ENCODE measurements at regions of chr5 and their contacts with region 1.

Region 1: DNA sequence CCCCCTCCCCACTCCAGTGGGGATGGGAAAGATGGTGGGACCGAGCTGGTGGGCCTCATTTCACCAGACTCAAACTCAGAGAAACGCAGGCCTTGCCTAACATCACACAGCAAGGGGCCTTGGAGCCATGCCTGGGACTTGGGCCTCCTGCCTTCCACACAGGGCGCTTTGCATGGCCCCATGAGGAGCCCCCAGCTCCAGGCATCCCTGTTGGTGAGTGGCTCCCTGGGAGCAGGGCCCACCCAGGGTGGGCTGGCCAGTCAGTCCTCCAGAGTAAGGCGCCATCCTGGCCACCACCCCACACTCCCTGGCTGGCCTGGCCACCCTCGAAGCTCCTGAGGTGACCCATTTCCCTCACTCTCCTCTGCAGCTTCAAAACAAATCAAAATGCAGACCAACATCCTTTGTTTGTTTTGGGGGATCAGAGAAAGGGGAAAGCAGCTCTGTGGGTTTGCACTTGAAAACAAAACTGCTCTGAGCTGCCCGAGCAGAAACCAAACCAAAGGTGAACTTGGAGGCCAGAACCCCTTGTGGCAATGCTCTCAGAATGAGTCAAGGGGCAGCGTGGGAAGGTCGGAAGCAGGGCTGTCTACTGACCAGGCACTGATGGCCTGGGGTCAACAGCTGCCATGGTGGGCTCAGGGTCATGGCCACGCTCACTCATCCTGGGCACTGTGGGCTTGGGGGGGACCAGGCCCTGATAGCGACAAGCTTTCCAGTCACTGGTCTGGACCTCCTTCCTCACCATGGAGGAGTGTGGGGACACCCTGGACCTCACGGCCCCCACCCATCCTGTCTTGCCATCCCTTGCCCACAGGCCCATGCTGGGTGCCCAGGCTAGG is 37.0 kb upstream of the VDAC1 start:
- DNase-seq: no peak
- ATAC-seq: no peak; the same call in 2 of the 3 replicates
- H3K4me3 ChIP-seq: peak overlapping the region in 1 of 3 experiments; percentile 14; a peak in 1 of 6 replicates
- H3K27ac ChIP-seq: no peak overlapping the region
- H3K4me1 ChIP-seq: peaks cover 62% of the 10 kb centered on the region
- H3K27me3 ChIP-seq: no peaks in the 10 kb centered on the region
- CTCF ChIP-seq: no peak
- EP300 ChIP-seq: no peak
- POLR2A ChIP-seq: no peak
- RAD21 ChIP-seq: no peak

Region 2: DNA sequence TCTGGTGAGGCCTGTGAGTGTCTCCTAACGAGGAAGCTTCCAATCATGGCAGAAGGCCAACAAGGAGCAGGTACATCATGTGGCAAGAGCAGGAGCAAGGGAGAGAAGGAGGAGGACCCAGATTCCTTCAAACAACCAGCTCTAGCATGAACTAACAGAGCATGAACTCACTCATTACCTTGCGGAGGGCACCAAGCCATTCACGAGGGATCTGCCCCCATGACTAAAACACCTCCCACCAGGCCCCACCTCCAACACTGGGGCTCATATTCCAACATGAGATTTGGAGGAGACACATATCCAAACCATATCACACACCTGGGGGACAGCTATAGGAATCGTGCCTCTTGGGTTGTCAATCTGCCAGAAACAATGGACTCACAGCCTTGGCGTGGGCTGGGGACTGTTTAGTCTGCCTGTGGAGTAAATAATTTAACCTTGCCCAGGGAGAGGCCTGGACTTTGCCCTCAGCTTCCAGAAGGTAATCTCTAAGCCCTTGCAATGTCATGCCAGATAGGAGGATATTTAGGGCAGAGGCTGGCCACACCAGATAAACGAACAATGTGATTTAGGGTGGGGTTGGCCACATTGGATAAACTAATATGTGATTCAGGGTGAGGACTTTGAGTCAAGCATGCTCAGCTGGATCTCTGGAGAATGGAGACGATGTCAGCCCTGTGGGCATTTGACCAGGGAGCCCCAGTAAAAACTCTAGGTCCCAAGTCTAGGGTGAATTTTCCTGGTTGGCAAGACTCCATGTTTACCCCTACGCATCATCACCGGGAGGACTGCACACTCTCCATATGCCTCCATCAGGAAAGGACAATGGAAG is 23.4 kb before region 1 on chr5:
- CTCF ChIA-PET with region 1: interaction called, 4 read pairs
- POLR2A ChIA-PET with region 1: interaction called, 17 read pairs
- in situ Hi-C with region 1: no loop called
- intact Hi-C with region 1: no loop called
- DNase-seq: peak; percentile 91
- ATAC-seq: peak; percentile 72
- H3K4me3 ChIP-seq: peak overlapping the region; percentile 24 to 60 (median 58)
- H3K27ac ChIP-seq: peak overlapping the region; percentile 93
- H3K4me1 ChIP-seq: peaks cover 60% of the 10 kb centered on the region
- H3K27me3 ChIP-seq: no peaks in the 10 kb centered on the region
- CTCF ChIP-seq: 0 out of 2 replicates have a peak, but pooled peaks have one; percentile 22
- EP300 ChIP-seq: peak; percentile 48 to 64; a peak in 2 of 4 replicates
- POLR2A ChIP-seq: peak in 1 of 2 experiments; percentile 67
- RAD21 ChIP-seq: no peak

Region 3: GRCh38 chr5:134070725-134071613 is 29.2 kb after region 1 on chr5:
- CTCF ChIA-PET with region 1: interaction called, 9 read pairs
- POLR2A ChIA-PET with region 1: no interaction called
- in situ Hi-C with region 1: no loop called
- intact Hi-C with region 1: loop called (anchors 5 kb)
- DNase-seq: peak; percentile 72
- ATAC-seq: peak; percentile 88
- H3K4me3 ChIP-seq: peak overlapping the region; percentile 63 to 75 (median 68)
- H3K27ac ChIP-seq: peak overlapping the region; percentile 58
- H3K4me1 ChIP-seq: peaks cover 47% of the 10 kb centered on the region
- H3K27me3 ChIP-seq: no peaks in the 10 kb centered on the region
- CTCF ChIP-seq: peak; percentile 81
- EP300 ChIP-seq: peak in 1 of 2 experiments; percentile 84; a peak in 2 of 4 replicates
- POLR2A ChIP-seq: peak; percentile 13 to 24; a peak in 1 of 4 replicates
- RAD21 ChIP-seq: no peak; the same call in 1 of the 2 replicates

Region 4: GRCh38 chr5:134140530-134141201 is 98.9 kb after region 1 on chr5:
- CTCF ChIA-PET with region 1: interaction called, 71 read pairs
- POLR2A ChIA-PET with region 1: interaction called, 14 read pairs
- in situ Hi-C with region 1: loop called (anchors 5 kb)
- intact Hi-C with region 1: loop called (anchors 1 kb)
- DNase-seq: peak; percentile 78
- ATAC-seq: peak; percentile 78
- H3K4me3 ChIP-seq: no peak overlapping the region
- H3K27ac ChIP-seq: no peak overlapping the region
- H3K4me1 ChIP-seq: peaks cover 24% of the 10 kb centered on the region
- H3K27me3 ChIP-seq: no peaks in the 10 kb centered on the region
- CTCF ChIP-seq: peak; percentile 84
- EP300 ChIP-seq: no peak
- POLR2A ChIP-seq: no peak
- RAD21 ChIP-seq: peak; percentile 76

Region 5: DNA sequence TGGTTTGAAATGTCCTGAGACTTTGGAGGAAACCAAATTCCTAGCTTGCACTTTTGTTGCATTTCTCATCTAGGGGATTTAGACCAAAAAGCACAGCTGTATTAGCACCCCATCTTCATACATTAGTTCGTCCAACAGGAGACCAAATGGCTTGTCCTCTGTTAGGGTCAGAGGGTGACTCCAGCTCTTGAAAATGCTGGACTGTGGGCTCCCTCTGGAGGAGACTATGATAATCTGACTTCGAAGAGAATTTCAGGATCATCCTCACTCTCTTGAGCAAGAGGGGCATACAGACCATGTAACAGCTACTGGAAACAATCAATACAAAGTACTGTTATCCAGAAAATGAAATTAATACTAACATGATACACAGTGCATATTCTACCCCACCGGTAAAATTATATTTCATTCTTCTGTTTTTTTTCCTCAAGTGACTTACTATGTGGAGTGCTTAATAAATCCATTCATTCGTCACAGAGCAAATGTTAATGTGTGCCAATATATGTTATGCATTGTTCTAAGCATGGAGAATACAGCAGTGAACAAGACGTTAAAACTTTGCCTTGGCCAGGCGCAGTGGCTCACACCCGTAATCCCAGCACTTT is 247.8 kb after region 1 on chr5:
- CTCF ChIA-PET with region 1: no interaction called
- POLR2A ChIA-PET with region 1: interaction called, 3 read pairs
- in situ Hi-C with region 1: loop called (anchors 10 kb)
- intact Hi-C with region 1: no loop called
- DNase-seq: peak; percentile 84
- ATAC-seq: peak; percentile 99
- H3K4me3 ChIP-seq: no peak overlapping the region
- H3K27ac ChIP-seq: no peak overlapping the region
- H3K4me1 ChIP-seq: no peaks in the 10 kb centered on the region
- H3K27me3 ChIP-seq: no peaks in the 10 kb centered on the region
- CTCF ChIP-seq: peak; percentile 89
- EP300 ChIP-seq: no peak
- POLR2A ChIP-seq: no peak
- RAD21 ChIP-seq: peak; percentile 95

Measured in HepG2 (cell line).